Right cardiac atrium (tissue), 5 donors: ENCODE measurements at regions of chr11 and their contacts with region 1.

Region 1: GRCh38 chr11:117946842-117947526 is 17.8 kb upstream of the TMPRSS13 start:
- DNase-seq: peak; percentile 89 to 95 (median 94)
- ATAC-seq: peak; percentile 93 to 95
- H3K4me3 ChIP-seq: no peak overlapping the region
- H3K27ac ChIP-seq: no peak overlapping the region
- H3K4me1 ChIP-seq: no peaks in the 10 kb centered on the region
- H3K27me3 ChIP-seq: no peaks in the 10 kb centered on the region

Region 2: GRCh38 chr11:117426269-117426685 is 520.7 kb before region 1 on chr11:
- intact Hi-C with region 1: loop called in 1 of 4 experiments (anchors 5 kb)
- DNase-seq: peak; percentile 58 to 85 (median 85)
- ATAC-seq: peak; percentile 58 to 69
- H3K4me3 ChIP-seq: no peak overlapping the region
- H3K27ac ChIP-seq: no peak overlapping the region
- H3K4me1 ChIP-seq: no peaks in the 10 kb centered on the region
- H3K27me3 ChIP-seq: no peaks in the 10 kb centered on the region

Region 3: DNA sequence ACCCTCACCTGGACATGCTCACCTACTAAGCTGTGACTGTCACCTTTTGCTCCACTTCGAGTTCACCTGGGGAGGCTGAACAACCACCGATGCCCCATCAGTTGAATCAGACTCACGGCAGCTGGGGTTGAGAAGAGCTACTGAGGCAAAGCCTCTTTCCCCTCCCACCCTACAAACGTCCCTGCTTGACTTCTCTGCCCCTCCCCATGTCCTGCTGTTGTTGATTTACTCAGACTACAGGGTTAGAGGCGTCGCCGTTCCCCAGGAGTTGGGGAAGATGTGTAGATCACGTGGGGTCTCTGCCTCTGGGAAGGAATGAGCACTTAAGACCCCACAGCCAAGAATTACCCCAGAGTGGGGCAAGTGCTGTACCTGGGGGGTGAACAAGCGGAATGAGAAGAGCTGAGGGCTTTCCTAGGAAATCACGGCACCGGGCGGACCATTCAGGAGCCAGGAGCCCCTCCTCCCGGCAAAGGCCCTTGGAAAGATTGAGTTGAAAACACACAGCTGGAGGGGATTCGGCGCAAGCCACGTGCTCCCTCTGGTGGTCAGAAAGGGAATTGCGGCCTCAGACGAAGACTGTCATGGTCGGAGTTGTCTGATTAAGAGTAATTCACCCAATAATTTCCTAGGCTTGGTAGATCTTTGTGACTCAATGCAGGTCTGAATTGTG is 129.5 kb before region 1 on chr11:
- intact Hi-C with region 1: loop called in 1 of 4 experiments (anchors 5 kb)
- DNase-seq: peak; percentile 80 to 93 (median 93)
- ATAC-seq: peak; percentile 61 to 65
- H3K4me3 ChIP-seq: no peak overlapping the region
- H3K27ac ChIP-seq: peak overlapping the region; percentile 68
- H3K4me1 ChIP-seq: peaks cover 4% of the 10 kb centered on the region
- H3K27me3 ChIP-seq: no peaks in the 10 kb centered on the region

Region 4: DNA sequence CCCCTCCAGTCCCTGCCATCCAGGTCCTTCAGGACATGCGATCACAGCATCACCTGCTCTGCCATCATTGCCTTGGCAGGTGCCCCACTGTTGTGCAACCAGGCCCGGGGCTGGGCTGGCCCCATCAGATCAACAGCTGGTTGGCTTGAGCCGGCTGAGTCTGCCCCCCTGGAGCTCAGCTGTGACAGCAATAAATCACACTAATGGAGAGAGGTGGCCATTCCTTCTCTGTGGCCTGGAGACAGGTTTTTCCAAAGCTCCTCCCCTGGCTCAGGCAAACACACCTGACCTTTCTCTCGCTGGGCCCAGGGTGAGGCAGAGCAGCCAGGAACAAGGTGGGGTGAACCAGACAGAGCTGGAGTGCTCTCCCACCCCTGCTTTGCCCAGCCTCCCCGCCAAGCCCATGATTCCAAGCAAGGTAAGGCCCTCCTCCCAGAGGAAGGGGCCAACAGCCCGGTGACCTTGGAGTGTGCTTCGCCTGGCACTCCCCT is 113.5 kb before region 1 on chr11:
- intact Hi-C with region 1: no loop called
- DNase-seq: peak in 1 of 3 donors; percentile 55
- ATAC-seq: peak in 1 of 2 donors; percentile 20
- H3K4me3 ChIP-seq: no peak overlapping the region
- H3K27ac ChIP-seq: no peak overlapping the region
- H3K4me1 ChIP-seq: peaks cover 3% of the 10 kb centered on the region
- H3K27me3 ChIP-seq: no peaks in the 10 kb centered on the region

Region 5: GRCh38 chr11:117843666-117844484 is 103.1 kb before region 1 on chr11:
- intact Hi-C with region 1: loop called (anchors 1 to 5 kb)
- DNase-seq: peak; percentile 82 to 94 (median 92)
- ATAC-seq: peak; percentile 64 to 81
- H3K4me3 ChIP-seq: no peak overlapping the region
- H3K27ac ChIP-seq: no peak overlapping the region
- H3K4me1 ChIP-seq: no peaks in the 10 kb centered on the region
- H3K27me3 ChIP-seq: no peaks in the 10 kb centered on the region